Astrocyte of the cerebellum (primary cell): ENCODE measurements at regions of chr2 and their contacts with region 1.

Region 1: DNA sequence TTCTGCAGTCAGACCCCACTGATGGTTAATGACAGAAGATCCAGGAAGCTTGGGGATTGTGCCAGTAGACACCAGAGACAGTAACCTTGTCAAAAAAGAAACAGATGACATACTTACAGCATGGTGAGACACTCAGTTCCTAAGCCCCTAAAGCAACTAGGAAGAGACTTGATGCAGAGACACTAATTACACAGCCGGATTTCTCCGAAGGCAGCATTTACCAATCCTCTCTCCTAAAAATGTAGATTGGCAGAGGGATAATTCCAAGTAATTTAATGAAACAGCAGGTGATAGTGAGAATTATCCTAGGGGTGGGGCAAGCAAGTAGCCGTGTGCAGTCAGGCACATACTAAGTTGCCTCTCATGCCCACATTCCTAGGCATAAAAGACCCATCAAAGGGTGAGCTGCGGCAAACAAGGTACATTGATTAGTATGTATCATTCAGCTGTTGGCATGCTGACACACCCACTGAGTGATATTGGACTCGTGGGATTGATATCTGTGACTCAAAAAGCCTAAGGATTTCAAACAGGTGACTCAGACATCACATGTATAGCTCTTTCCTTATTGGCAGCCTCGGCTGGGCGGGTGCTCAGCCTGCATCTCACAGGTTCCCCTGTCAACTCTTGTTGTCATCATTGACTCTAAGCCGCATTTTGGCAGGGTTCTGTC is 296.7 kb upstream of the ATP5MC3 start:
- DNase-seq: no peak
- H3K4me3 ChIP-seq: no peak overlapping the region
- CTCF ChIP-seq: no peak

Region 2: DNA sequence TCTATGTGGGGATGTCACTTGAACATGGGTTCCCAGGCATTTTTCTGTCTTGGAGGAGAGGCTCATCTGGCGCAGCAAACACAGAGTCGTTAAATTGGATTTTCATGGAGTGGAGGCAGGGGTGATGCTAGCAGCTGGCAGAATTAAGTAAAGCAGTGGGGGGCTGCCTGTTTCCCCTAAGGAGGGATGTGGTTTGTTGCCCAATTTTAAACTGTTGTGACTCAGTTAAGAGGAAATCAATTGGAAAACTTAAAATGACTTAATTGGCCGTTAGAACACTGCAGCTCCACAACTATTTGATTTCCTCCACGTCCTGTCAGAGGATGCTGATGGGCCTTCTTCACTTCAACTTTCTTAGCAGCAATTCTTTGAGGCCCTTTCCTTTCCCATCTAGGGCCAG is 57.4 kb after region 1 on chr2:
- in situ Hi-C with region 1: loop called (anchors 5 kb)
- DNase-seq: no peak
- H3K4me3 ChIP-seq: no peak overlapping the region
- CTCF ChIP-seq: no peak

Region 3: GRCh38 chr2:175571078-175571653 is 92.9 kb after region 1 on chr2:
- in situ Hi-C with region 1: loop called (anchors 5 kb)
- DNase-seq: no peak
- H3K4me3 ChIP-seq: no peak overlapping the region
- CTCF ChIP-seq: no peak